ENCODE measurements at regions of chr6 and their contacts with region 1.

Region 1: GRCh38 chr6:142946181-142946923 is 1.4 kb upstream of the HIVEP2 start:
- DNase-seq: peak; percentile 84 to 97
- ATAC-seq: peak; percentile 40 to 65 (median 52)
- H3K4me3 ChIP-seq: peak overlapping the region; percentile 93
- H3K4me3 Mint-ChIP-seq: peak overlapping the region; percentile 91
- H3K27ac ChIP-seq: peak overlapping the region; percentile 95
- H3K27ac Mint-ChIP-seq: peak overlapping the region; percentile 99
- H3K4me1 ChIP-seq: peaks cover 15% of the 10 kb centered on the region
- H3K4me1 Mint-ChIP-seq: peaks cover 40 to 41% of the 10 kb centered on the region in 2 donors
- H3K27me3 ChIP-seq: no peaks in the 10 kb centered on the region
- H3K27me3 Mint-ChIP-seq: no peaks in the 10 kb centered on the region
- CTCF ChIP-seq: no peak

Region 2: GRCh38 chr6:142746524-142746923 is 199.8 kb before region 1 on chr6:
- intact Hi-C with region 1: loop called (anchors 5 kb)
- DNase-seq: peak in 1 of 2 donors; percentile 71
- ATAC-seq: peak; percentile 63 to 70 (median 64)
- H3K4me3 ChIP-seq: no peak overlapping the region
- H3K4me3 Mint-ChIP-seq: no peak overlapping the region
- H3K27ac ChIP-seq: no peak overlapping the region
- H3K27ac Mint-ChIP-seq: no peak overlapping the region
- H3K4me1 ChIP-seq: no peaks in the 10 kb centered on the region
- H3K4me1 Mint-ChIP-seq: no peaks in the 10 kb centered on the region
- H3K27me3 ChIP-seq: no peaks in the 10 kb centered on the region
- H3K27me3 Mint-ChIP-seq: peaks cover 6 to 13% of the 10 kb centered on the region in 2 donors
- CTCF ChIP-seq: peak; percentile 51

Region 3: DNA sequence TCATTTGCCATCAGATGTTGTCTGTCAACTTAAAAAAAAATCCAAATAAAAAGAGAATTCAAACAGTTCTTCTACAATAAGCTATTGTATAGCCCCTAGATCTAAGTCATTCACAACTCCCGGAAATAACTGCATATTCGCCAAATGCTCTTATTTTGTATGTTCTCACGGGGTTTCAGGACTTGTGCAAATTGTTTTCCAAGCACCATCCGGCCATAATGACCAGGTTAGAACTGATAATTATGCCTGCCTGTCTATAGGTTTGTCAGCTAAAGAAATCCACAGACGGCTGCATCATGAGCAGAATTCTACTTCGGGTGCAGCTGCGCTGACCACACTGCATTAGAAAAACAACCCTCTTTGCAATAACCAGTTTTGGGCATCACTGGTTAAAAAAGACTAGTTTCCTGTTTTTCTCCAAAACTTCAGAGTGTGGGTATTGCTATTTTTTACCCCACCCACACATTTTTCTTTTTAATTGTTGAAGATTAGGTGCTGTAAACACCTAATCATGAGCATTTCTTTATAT is 89.1 kb before region 1 on chr6:
- intact Hi-C with region 1: loop called (anchors 1 kb)
- DNase-seq: peak in 1 of 2 donors; percentile 64
- ATAC-seq: peak; percentile 22 to 40 (median 29)
- H3K4me3 ChIP-seq: peak overlapping the region; percentile 24
- H3K4me3 Mint-ChIP-seq: peak overlapping the region; percentile 89
- H3K27ac ChIP-seq: peak overlapping the region; percentile 65
- H3K27ac Mint-ChIP-seq: peak overlapping the region; percentile 78 to 92
- H3K4me1 ChIP-seq: peaks cover 39% of the 10 kb centered on the region
- H3K4me1 Mint-ChIP-seq: peaks cover 39 to 43% of the 10 kb centered on the region in 2 donors
- H3K27me3 ChIP-seq: no peaks in the 10 kb centered on the region
- H3K27me3 Mint-ChIP-seq: no peaks in the 10 kb centered on the region
- CTCF ChIP-seq: no peak

Region 4: DNA sequence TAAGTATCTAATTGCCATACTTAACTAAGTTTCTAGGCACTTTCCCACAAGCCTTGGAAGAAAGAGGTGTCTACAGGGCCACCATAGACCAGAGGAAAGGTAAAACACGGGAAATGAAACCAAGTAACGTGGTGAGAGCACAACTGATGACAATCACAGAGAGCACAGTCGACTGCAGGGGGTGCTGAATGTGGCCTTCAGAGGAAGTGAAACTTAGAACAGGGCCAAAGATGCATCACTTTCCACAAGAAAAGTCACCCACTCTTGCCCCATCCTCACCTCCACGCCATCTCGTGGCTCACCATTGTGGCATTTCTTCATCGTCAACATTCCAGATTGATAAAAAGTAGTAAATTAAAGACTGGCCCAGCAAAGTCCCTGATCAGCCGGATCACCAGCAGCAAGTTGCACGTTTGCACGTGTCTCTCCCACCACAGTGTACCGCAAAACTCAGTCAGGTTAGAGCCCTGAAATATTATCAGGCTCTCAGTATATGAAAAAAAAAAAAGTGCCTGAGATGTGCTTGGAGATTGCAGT is 32.8 kb before region 1 on chr6:
- intact Hi-C with region 1: loop called (anchors 1 kb)
- DNase-seq: peak; percentile 51 to 89
- ATAC-seq: peak; percentile 73 to 86 (median 80)
- H3K4me3 ChIP-seq: no peak overlapping the region
- H3K4me3 Mint-ChIP-seq: peak overlapping the region; percentile 68
- H3K27ac ChIP-seq: peak overlapping the region; percentile 84
- H3K27ac Mint-ChIP-seq: peak overlapping the region; percentile 78 to 90
- H3K4me1 ChIP-seq: peaks cover 36% of the 10 kb centered on the region
- H3K4me1 Mint-ChIP-seq: peaks cover 41 to 44% of the 10 kb centered on the region in 2 donors
- H3K27me3 ChIP-seq: no peaks in the 10 kb centered on the region
- H3K27me3 Mint-ChIP-seq: no peaks in the 10 kb centered on the region
- CTCF ChIP-seq: peak; percentile 54

Region 5: DNA sequence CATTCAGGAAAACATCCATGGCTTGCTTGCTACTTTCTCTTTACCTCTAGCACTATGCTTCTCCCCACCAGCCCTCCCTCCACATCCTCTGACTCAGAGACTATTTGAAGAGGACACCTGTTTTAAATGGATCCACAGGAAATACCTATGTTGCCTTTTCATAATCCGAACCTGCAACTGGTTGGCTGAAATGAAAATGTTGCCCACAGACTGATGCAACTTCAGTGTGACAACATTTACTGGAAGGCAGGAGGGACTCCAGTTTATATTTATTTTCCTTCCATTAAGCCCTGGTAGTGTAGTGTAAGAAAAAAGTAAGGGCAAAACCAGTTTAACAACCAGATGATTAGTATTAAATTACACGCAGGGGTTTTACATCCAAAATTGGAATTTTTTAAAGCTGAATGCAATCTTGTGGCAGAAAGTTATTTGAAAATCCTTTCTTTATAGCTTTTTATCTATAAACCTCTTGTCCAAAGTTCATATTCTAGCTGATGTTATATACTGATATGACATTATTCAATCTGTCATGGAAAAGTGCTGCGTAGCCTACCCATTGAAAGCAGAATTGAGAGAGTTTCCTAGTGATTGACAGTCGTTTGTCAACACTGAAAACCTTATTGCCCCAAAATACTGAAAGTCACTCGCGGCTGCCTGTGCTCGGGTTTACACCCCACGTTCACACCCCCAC is 113.5 kb after region 1 on chr6:
- intact Hi-C with region 1: loop called (anchors 10 kb)
- DNase-seq: peak in 1 of 2 donors; percentile 54
- ATAC-seq: no peak
- H3K4me3 ChIP-seq: peak overlapping the region; percentile 98
- H3K4me3 Mint-ChIP-seq: peak overlapping the region; percentile 90
- H3K27ac ChIP-seq: peak overlapping the region; percentile 90
- H3K27ac Mint-ChIP-seq: peak overlapping the region; percentile 84 to 95
- H3K4me1 ChIP-seq: peaks cover 10% of the 10 kb centered on the region
- H3K4me1 Mint-ChIP-seq: peaks cover 17 to 20% of the 10 kb centered on the region in 2 donors
- H3K27me3 ChIP-seq: no peaks in the 10 kb centered on the region
- H3K27me3 Mint-ChIP-seq: peaks cover 8 to 13% of the 10 kb centered on the region in 2 donors
- CTCF ChIP-seq: no peak

Measured in natural killer cell (primary cell).